PC-3 (cell line): ENCODE measurements at regions of chr7 and their contacts with region 1.

Region 1: DNA sequence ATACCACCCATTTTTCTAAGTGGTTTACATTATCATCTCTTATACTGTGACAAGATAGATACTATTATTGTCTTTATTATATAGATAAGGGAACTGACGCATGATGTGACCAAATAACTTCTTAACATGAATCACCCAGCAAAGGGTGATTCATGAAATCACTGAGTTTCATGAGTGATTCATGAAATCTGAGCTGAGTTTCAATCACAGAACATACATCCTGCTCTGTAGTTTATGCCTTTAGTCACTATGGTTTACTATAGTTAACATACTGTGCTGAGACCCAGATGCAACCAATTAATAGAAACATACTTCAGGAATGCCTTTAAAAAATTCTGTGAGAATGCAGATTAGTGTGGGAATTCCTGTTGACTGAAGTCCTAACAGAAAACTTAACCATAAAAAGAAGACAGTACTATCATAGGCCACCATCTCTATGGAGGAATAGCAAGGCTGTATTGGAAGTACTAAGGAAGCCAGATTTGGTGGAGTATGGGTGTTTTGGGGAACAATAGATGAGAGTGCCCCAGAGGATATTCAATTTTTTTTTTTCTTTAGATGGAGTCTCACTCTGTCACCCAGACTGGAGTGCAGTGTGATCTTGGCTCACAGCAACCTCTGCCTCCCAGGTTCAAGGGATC is 43.1 kb upstream of the SEMA3A start:
- DNase-seq: peak; percentile 97
- ATAC-seq: peak; percentile 92
- H3K4me3 ChIP-seq: no peak overlapping the region
- H3K27ac ChIP-seq: peak overlapping the region; percentile 100
- H3K4me1 ChIP-seq: peaks cover 32% of the 10 kb centered on the region
- H3K27me3 ChIP-seq: no peaks in the 10 kb centered on the region
- CTCF ChIP-seq: no peak

Region 2: GRCh38 chr7:83976295-83976694 is 261.4 kb before region 1 on chr7:
- CTCF ChIA-PET with region 1: no interaction called
- POLR2A ChIA-PET with region 1: no interaction called
- intact Hi-C with region 1: loop called (anchors 5 kb)
- DNase-seq: peak; percentile 74
- ATAC-seq: peak; percentile 56
- H3K4me3 ChIP-seq: no peak overlapping the region
- H3K27ac ChIP-seq: peak overlapping the region; percentile 29
- H3K4me1 ChIP-seq: no peaks in the 10 kb centered on the region
- H3K27me3 ChIP-seq: no peaks in the 10 kb centered on the region
- CTCF ChIP-seq: peak; percentile 83

Region 3: DNA sequence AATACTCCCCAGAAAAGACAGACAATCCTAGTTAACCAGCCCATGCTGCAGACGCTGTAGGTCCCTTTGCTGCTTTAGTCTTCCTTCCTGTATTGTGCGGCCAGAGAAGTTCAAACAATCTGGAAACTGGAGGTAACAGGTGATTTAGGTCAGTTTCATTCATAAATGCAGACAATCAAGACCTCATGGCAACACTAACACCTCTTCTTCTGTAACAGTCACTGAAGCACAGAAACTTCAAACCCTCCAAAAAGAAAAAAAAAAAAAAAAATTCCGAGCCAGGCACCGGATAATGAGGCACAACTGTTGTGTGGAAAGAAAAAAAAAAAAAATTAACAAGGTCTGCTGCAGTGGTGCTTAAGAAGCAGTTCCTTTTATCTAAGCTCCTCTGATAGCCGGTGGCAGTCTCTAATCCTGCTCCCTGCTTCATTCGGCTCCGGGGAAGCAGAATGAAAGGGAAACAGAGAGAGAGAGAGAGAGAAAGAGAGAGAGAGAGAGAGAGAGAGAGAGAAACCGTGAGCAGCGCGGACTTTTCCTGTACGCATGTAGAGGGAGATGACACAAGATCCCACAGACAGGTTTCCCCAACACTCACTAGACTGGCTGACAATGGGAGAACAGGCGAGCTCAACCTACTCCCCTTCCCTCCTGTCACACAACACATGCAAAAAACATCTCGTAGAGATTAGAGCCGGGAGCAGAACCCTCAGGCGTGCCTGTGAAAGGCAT is 42.9 kb before region 1 on chr7 and contains the start of gene SEMA3A:
- CTCF ChIA-PET with region 1: no interaction called
- POLR2A ChIA-PET with region 1: interaction called, 5 read pairs
- intact Hi-C with region 1: loop called (anchors 2 kb)
- DNase-seq: peak; percentile 77
- ATAC-seq: peak; percentile 77
- H3K4me3 ChIP-seq: peak within 1 kb of the TSS; percentile 79
- H3K27ac ChIP-seq: peak within 1 kb of the TSS; percentile 94
- H3K4me1 ChIP-seq: peaks cover 36% of the 10 kb centered on the region
- H3K27me3 ChIP-seq: no peaks in the 10 kb centered on the region
- CTCF ChIP-seq: no peak
- total RNA-seq, gene SEMA3A: 13.7 and 16.9 TPM in 2 replicates

Region 4: DNA sequence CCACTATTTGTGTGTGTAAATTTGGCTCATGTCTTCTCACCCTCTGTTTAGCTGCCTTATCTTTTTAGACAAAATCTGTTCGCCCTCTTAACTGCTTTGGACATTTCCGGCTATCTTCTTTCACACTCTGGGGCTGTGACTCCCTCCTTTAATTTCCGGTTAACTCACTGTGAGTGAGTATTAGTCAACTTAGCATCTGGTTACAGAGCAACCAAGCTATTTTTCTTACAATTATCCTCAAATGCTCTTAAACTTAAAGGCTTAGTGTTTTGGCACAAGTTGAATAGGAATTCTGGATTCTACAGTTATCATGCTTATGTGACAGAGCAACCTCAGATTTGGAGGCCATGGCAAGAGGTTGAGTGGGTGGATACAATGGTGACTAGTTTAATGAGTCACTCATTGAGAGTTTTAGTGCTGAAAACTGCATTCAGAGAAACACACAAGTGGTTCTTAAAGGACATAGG is 134.5 kb after region 1 on chr7:
- CTCF ChIA-PET with region 1: no interaction called
- POLR2A ChIA-PET with region 1: no interaction called
- intact Hi-C with region 1: loop called (anchors 2 kb)
- DNase-seq: peak; percentile 88
- ATAC-seq: peak; percentile 88
- H3K4me3 ChIP-seq: no peak overlapping the region
- H3K27ac ChIP-seq: peak overlapping the region; percentile 80
- H3K4me1 ChIP-seq: peaks cover 34% of the 10 kb centered on the region
- H3K27me3 ChIP-seq: no peaks in the 10 kb centered on the region
- CTCF ChIP-seq: no peak

Region 5: DNA sequence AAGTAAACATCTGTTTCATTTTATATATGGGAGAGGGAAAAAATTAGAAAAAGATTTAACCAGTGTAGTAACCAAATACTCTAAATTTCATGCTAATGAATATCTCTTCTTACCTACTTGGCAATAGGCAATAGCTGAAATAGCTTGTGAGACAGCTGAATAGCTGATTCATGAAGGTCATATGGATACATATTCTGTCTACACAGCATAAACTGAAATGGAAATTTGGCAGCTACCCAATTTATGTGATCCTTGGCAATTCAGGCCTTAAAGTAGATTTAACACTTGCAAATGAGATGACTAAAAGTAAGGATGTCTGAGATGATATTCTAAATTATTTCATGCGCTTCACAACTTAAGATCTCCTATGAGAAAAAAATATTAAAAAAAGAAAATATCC is 218.1 kb after region 1 on chr7:
- CTCF ChIA-PET with region 1: no interaction called
- POLR2A ChIA-PET with region 1: no interaction called
- intact Hi-C with region 1: loop called (anchors 5 kb)
- DNase-seq: peak; percentile 22
- ATAC-seq: no peak
- H3K4me3 ChIP-seq: no peak overlapping the region
- H3K27ac ChIP-seq: no peak overlapping the region
- H3K4me1 ChIP-seq: peaks cover 16% of the 10 kb centered on the region
- H3K27me3 ChIP-seq: no peaks in the 10 kb centered on the region
- CTCF ChIP-seq: no peak

Region 6: GRCh38 chr7:84904561-84904960 is 666.9 kb after region 1 on chr7:
- CTCF ChIA-PET with region 1: no interaction called
- POLR2A ChIA-PET with region 1: no interaction called
- intact Hi-C with region 1: no loop called
- DNase-seq: peak; percentile 55
- ATAC-seq: peak; percentile 99
- H3K4me3 ChIP-seq: no peak overlapping the region
- H3K27ac ChIP-seq: no peak overlapping the region
- H3K4me1 ChIP-seq: peaks cover 12% of the 10 kb centered on the region
- H3K27me3 ChIP-seq: no peaks in the 10 kb centered on the region
- CTCF ChIP-seq: no peak